ENCODE measurements at regions of chr4 and their contacts with region 1.

Region 1: DNA sequence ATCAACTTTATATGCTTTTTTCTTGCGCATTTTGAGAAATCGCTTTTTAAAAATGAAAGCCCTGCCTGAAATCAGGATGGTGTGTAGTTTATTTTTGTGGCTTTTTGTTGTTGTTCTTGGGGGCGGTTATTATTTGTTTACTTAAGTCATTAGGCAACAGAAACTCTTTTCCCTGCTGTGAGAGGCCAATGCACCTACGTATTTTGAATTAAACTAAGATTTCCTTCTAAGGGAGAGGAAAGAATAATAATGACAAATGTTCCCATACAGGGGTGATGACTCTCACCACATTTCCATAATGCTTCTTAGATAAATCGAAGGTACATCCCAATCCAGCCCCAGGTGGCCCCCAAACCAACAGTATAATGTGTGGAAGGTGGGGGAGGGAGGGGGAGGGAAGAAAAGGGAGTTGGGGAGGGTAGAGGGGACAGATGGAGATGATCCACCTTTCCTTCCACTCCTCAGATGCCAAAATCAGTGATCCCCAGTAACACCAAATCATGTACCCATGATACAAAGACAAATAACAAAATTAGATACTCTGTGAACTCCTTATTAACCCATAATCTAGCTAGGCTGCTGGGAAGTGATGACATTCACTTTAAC is 39.6 kb downstream of the ZNF827 start:
- DNase-seq: no peak
- H3K4me3 Mint-ChIP-seq: no peak overlapping the region
- H3K27ac Mint-ChIP-seq: no peak overlapping the region
- H3K4me1 Mint-ChIP-seq: peaks cover 3% of the 10 kb centered on the region
- H3K27me3 Mint-ChIP-seq: no peaks in the 10 kb centered on the region
- CTCF ChIP-seq: no peak

Region 2: DNA sequence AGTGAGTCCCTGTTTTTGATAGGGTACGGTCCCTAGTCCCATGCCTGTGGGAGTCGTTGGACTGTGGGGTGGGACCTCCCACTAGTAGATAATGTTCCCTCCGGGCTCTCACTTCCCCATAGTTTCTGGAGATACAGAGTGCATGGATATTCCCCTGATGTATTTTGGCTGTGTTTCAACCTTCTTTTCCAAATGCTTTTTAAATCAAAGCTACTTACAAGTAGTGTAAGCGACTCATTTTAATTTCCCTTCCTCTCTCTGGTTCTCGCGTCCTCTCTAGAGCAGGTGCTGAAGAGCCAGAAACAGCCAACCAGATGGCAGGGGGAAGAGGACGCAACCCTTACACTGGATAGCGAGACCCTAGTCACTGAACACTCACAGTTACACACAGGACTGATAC is 39.6 kb before region 1 on chr4:
- CTCF ChIA-PET with region 1: no interaction called
- POLR2A ChIA-PET with region 1: no interaction called
- intact Hi-C with region 1: loop called (anchors 1 kb)
- DNase-seq: no peak
- H3K4me3 Mint-ChIP-seq: no peak overlapping the region
- H3K27ac Mint-ChIP-seq: no peak overlapping the region
- H3K4me1 Mint-ChIP-seq: no peaks in the 10 kb centered on the region
- H3K27me3 Mint-ChIP-seq: no peaks in the 10 kb centered on the region
- CTCF ChIP-seq: no peak

Region 3: DNA sequence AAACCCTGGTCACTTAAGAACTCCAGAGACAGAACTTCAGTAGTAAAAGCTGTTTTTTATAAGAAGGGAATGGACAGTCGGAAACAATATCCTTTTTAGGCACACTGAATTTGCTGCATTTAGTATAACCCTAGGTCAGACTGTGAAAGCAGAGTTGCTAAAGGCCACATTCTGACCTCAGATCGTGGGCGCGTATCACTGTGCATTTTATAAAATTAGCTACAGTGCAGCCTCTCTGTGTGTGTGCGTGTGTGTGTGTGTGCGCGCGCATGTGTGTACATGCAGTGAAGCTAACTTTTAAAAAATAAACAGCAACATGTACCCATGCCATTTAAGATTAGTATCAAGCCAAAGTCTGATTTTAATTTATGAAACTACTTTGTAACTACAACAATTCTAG is 31.6 kb after region 1 on chr4:
- CTCF ChIA-PET with region 1: no interaction called
- POLR2A ChIA-PET with region 1: no interaction called
- intact Hi-C with region 1: no loop called
- DNase-seq: no peak
- H3K4me3 Mint-ChIP-seq: no peak overlapping the region
- H3K27ac Mint-ChIP-seq: no peak overlapping the region
- H3K4me1 Mint-ChIP-seq: peaks cover 18% of the 10 kb centered on the region
- H3K27me3 Mint-ChIP-seq: no peaks in the 10 kb centered on the region
- CTCF ChIP-seq: no peak